CD8-positive, alpha-beta memory T cell (primary cell): ENCODE measurements at regions of chr16 and their contacts with region 1.

Region 1: GRCh38 chr16:46607529-46607928 is 13.7 kb downstream of the SHCBP1 start:
- DNase-seq: peak in 1 of 5 donors; percentile 24
- H3K4me3 ChIP-seq: no peak overlapping the region
- H3K4me3 Mint-ChIP-seq: no peak overlapping the region
- H3K27ac ChIP-seq: no peak overlapping the region
- H3K27ac Mint-ChIP-seq: no peak overlapping the region
- H3K4me1 ChIP-seq: no peaks in the 10 kb centered on the region
- H3K4me1 Mint-ChIP-seq: peaks cover 0 to 1% (median 0%) of the 10 kb centered on the region in 3 donors
- H3K27me3 ChIP-seq: no peaks in the 10 kb centered on the region
- H3K27me3 Mint-ChIP-seq: no peaks in the 10 kb centered on the region

Region 2: DNA sequence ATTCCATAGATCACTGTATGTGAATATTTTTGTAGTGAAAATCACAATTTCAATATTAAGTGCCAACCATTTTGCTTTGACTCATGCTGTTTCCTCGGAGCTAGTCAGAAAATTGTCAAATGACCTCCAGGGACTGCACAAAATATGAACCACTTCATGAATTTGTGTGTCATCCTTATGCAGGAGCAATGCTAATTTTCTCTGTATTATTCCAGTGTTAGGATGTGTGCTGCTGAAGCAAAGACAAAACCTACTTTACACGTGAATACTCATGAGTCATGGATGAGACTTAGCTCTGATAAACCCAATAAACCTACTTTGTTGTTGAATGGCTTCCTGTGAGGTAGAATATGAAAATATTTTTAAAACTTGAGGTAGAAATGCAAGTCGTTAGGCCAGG is 51.6 kb before region 1 on chr16:
- CTCF ChIA-PET with region 1: interaction called, 15 read pairs
- POLR2A ChIA-PET with region 1: no interaction called
- DNase-seq: no peak
- H3K4me3 ChIP-seq: no peak overlapping the region
- H3K4me3 Mint-ChIP-seq: no peak overlapping the region
- H3K27ac ChIP-seq: no peak overlapping the region
- H3K27ac Mint-ChIP-seq: no peak overlapping the region
- H3K4me1 ChIP-seq: no peaks in the 10 kb centered on the region
- H3K4me1 Mint-ChIP-seq: peaks cover 0 to 11% (median 3%) of the 10 kb centered on the region in 3 donors
- H3K27me3 ChIP-seq: no peaks in the 10 kb centered on the region
- H3K27me3 Mint-ChIP-seq: peaks cover 8 to 16% of the 10 kb centered on the region in 2 donors